Heart right ventricle (tissue), 16 donors: ENCODE measurements at regions of chr12 and their contacts with region 1.

Region 1: GRCh38 chr12:62934799-62935674 is at the start of gene PPM1H:
- DNase-seq: peak; percentile 73 to 79
- ATAC-seq: peak; percentile 77 to 91 (median 83)
- H3K4me3 ChIP-seq: peak within 1 kb of the TSS; percentile 67 to 95 (median 86)
- H3K27ac ChIP-seq: peak within 1 kb of the TSS in 9 of 10 donors; percentile 56 to 90 (median 80)
- H3K4me1 ChIP-seq: peaks cover 0 to 25% (median 14%) of the 10 kb centered on the region in 9 donors
- H3K27me3 ChIP-seq: peaks cover 0 to 15% (median 0%) of the 10 kb centered on the region in 7 donors
- CTCF ChIP-seq: peak; percentile 32 to 66 (median 59)
- total RNA-seq, gene PPM1H: 4.4 to 7.1 (median 5.5) TPM

Region 2: DNA sequence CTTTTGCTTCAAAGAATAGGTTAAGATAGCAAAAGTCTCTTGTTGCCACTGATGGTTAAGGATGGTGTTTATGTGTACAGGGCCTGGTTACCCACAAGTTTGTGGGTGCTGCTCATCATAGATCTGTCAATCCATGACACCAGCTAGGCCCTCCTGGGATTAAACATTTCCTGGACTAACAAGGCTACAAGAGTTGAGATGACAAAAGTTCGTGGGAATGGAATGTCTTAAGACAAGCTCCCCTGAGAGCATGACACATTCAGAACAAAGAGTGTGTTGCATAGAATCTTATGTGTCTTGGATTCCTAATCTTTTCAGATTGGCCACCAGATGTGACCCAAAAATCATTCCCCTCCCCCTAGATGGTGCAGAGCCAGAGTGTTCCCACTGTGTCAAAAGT is 1267.4 kb before region 1 on chr12:
- intact Hi-C with region 1: no loop called
- DNase-seq: no peak
- ATAC-seq: no peak
- H3K4me3 ChIP-seq: no peak overlapping the region
- H3K27ac ChIP-seq: no peak overlapping the region
- H3K4me1 ChIP-seq: no peaks in the 10 kb centered on the region
- H3K27me3 ChIP-seq: no peaks in the 10 kb centered on the region
- CTCF ChIP-seq: no peak

Region 3: DNA sequence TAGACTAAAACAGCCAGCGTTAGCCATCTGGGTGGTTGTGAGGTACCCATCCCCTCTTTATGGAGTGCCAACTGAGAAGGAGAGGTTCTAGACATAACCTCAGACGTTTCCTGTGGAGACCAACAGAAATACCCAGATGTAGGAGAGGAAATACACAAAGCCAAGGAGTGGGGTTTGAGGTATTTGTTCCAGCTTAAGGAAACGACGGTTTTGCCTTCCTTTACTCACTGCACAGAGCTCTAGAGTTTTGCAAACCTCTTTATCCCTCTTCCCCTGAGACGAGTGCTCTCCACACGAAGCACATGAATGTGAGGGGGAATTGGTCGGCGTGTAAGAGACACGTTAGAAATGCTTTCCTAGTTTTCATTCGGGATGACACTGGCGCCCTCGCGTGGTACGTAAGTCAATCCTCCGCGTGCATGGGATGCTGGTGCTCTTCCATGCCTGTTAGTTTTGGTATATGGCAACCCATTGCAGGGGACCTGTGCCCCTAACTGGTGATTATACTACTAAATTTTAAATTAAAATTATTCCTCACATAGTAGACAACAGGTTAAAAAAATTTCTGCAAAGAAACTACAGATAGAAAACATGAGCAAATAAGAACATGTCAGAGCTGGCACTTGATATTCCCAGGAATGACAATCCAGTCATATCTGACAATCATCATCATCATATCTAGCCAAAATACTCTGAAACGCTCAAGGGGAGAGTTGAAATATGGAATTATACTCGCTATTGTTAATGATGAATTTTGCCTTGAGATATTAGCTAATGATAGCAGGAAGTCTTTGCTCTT is 121.8 kb before region 1 on chr12:
- intact Hi-C with region 1: loop called in 9 of 10 experiments (anchors 2 to 10 kb)
- DNase-seq: peak; percentile 59 to 62
- ATAC-seq: peak in 6 of 8 donors; percentile 54 to 84 (median 63)
- H3K4me3 ChIP-seq: peak overlapping the region in 5 of 10 donors; percentile 22 to 33 (median 27)
- H3K27ac ChIP-seq: peak overlapping the region in 1 of 10 donors; percentile 16
- H3K4me1 ChIP-seq: peaks cover 0 to 28% (median 13%) of the 10 kb centered on the region in 9 donors
- H3K27me3 ChIP-seq: no peaks in the 10 kb centered on the region
- CTCF ChIP-seq: peak; percentile 19 to 85 (median 73)

Region 4: GRCh38 chr12:62848421-62848820 is 86.6 kb before region 1 on chr12:
- intact Hi-C with region 1: loop called in 2 of 10 experiments (anchors 10 kb)
- DNase-seq: no peak
- ATAC-seq: peak in 5 of 8 donors; percentile 25 to 56 (median 43)
- H3K4me3 ChIP-seq: no peak overlapping the region
- H3K27ac ChIP-seq: peak overlapping the region in 7 of 10 donors; percentile 13 to 78 (median 26)
- H3K4me1 ChIP-seq: peaks cover 3 to 72% (median 26%) of the 10 kb centered on the region in 9 donors
- H3K27me3 ChIP-seq: no peaks in the 10 kb centered on the region
- CTCF ChIP-seq: no peak

Region 5: GRCh38 chr12:62866451-62867082 is 68.5 kb before region 1 on chr12:
- intact Hi-C with region 1: loop called in 2 of 10 experiments (anchors 5 kb)
- DNase-seq: no peak
- ATAC-seq: peak in 7 of 8 donors; percentile 9 to 58 (median 37)
- H3K4me3 ChIP-seq: no peak overlapping the region
- H3K27ac ChIP-seq: peak overlapping the region in 9 of 10 donors; percentile 33 to 80 (median 59)
- H3K4me1 ChIP-seq: peaks cover 14 to 51% (median 36%) of the 10 kb centered on the region in 9 donors
- H3K27me3 ChIP-seq: no peaks in the 10 kb centered on the region
- CTCF ChIP-seq: no peak